Activated CD4-positive, alpha-beta memory T cell treated with anti-CD3 and anti-CD28 coated beads, Interleukin-2, amount 10 ng/mL, durations not matched to agents 7 days and 5 days (primary cell): ENCODE measurements at regions of chr5 and their contacts with region 1.

Region 1: GRCh38 chr5:43120720-43121564 is at the start of gene ZNF131:
- DNase-seq: peak; percentile 97
- H3K4me3 Mint-ChIP-seq: peak within 1 kb of the TSS; percentile 94
- H3K27ac Mint-ChIP-seq: peak within 1 kb of the TSS; percentile 93
- H3K4me1 Mint-ChIP-seq: peaks cover 39% of the 10 kb centered on the region
- H3K27me3 Mint-ChIP-seq: peaks cover 3% of the 10 kb centered on the region
- total RNA-seq, gene ZNF131: 42.5 to 44.7 TPM

Region 2: DNA sequence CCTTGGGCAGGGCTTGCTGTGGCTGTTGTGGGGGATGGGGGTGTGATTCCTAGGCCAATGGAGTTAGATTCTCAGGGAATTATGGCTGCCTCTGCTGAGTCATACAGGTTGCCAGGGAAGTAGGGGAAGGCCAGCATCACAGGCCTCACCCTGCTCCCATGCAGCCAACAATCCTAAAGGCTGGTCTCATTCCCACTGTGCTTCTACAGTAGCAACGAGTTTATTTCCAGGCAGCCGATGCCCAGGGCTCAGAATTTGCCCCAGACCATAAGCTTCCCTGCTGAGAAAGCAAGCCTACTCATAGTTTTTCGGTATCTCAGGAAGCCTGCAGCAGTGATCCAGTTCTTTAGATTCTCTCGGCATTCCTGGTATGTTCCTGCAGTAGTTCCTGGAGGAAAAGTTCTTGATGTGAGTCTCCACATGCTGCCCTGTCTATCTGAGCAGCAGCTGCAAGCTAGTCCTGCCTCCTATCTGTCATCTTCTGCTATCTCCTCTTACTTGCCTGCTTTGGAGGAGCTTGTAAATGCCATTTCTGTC is 250.0 kb before region 1 on chr5:
- CTCF ChIA-PET with region 1: no interaction called
- POLR2A ChIA-PET with region 1: no interaction called
- DNase-seq: no peak
- H3K4me3 Mint-ChIP-seq: no peak overlapping the region
- H3K27ac Mint-ChIP-seq: no peak overlapping the region
- H3K4me1 Mint-ChIP-seq: peaks cover 5% of the 10 kb centered on the region
- H3K27me3 Mint-ChIP-seq: peaks cover 24% of the 10 kb centered on the region

Region 3: DNA sequence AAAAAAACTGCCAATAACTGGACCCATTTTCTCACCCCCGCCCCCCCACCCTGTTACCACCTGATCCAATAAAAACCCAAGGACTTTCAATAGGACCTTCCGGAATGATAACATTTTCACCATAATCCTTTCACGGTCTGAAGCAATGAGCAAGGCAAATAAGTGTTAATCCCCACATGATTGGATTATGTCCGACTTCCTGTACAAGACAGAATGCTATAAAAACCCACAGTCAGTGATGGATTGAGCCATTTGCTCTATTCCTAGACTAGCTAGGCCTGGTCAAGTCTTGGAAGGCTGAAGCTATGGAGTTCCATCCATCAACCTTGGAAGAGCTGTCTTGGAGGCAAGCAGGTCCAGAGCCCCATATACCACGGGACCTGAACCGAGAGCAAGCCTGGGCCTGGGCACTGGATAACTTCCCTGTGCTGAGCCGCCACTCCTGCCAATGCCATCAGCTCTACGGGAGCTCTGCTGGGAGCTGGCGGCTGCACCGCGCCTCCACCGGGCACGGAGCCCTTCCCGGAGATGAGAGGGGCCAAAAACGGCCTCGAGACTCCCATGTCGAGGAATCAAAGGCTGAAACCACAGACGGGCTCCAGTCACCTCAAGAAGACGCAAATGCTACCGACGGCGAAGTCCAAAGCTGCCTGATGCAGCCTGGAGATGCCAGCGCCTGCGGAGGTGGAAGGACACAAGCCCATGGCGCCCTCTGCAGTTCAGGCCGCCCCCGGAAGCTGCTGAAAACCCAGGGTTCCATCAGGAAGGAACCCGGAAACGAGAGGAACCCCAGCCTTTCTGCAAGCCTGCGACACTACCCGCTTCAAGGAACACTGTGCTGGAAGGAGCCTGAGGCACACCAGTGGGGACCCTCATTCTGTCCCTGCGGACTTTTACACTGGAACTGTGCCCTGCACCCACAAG is 150.0 kb before region 1 on chr5:
- CTCF ChIA-PET with region 1: no interaction called
- POLR2A ChIA-PET with region 1: no interaction called
- DNase-seq: no peak
- H3K4me3 Mint-ChIP-seq: no peak overlapping the region
- H3K27ac Mint-ChIP-seq: no peak overlapping the region
- H3K4me1 Mint-ChIP-seq: peaks cover 6% of the 10 kb centered on the region
- H3K27me3 Mint-ChIP-seq: no peaks in the 10 kb centered on the region

Region 4: GRCh38 chr5:42994246-42995151 is 126.4 kb before region 1 on chr5:
- CTCF ChIA-PET with region 1: interaction called, 27 read pairs
- POLR2A ChIA-PET with region 1: interaction called, 63 read pairs
- DNase-seq: peak; percentile 91
- H3K4me3 Mint-ChIP-seq: peak overlapping the region; percentile 99
- H3K27ac Mint-ChIP-seq: peak overlapping the region; percentile 100
- H3K4me1 Mint-ChIP-seq: peaks cover 25% of the 10 kb centered on the region
- H3K27me3 Mint-ChIP-seq: no peaks in the 10 kb centered on the region

Region 5: GRCh38 chr5:43040287-43041098 is 80.4 kb before region 1 on chr5 and contains the start of gene ANXA2R:
- CTCF ChIA-PET with region 1: interaction called, 24 read pairs
- POLR2A ChIA-PET with region 1: interaction called, 130 read pairs
- DNase-seq: peak; percentile 96
- H3K4me3 Mint-ChIP-seq: peak within 1 kb of the TSS; percentile 97
- H3K27ac Mint-ChIP-seq: peak within 1 kb of the TSS; percentile 99
- H3K4me1 Mint-ChIP-seq: peaks cover 42% of the 10 kb centered on the region
- H3K27me3 Mint-ChIP-seq: no peaks in the 10 kb centered on the region
- total RNA-seq, gene ANXA2R: 25.1 to 28.3 TPM

Region 6: GRCh38 chr5:43051668-43052067 is 69.3 kb before region 1 on chr5:
- CTCF ChIA-PET with region 1: no interaction called
- POLR2A ChIA-PET with region 1: no interaction called
- DNase-seq: no peak
- H3K4me3 Mint-ChIP-seq: no peak overlapping the region
- H3K27ac Mint-ChIP-seq: no peak overlapping the region
- H3K4me1 Mint-ChIP-seq: peaks cover 4% of the 10 kb centered on the region
- H3K27me3 Mint-ChIP-seq: peaks cover 2% of the 10 kb centered on the region

Region 7: GRCh38 chr5:43140286-43140685 is 19.3 kb after region 1 on chr5:
- CTCF ChIA-PET with region 1: interaction called, 9 read pairs
- POLR2A ChIA-PET with region 1: interaction called, 15 read pairs
- DNase-seq: no peak
- H3K4me3 Mint-ChIP-seq: no peak overlapping the region
- H3K27ac Mint-ChIP-seq: no peak overlapping the region
- H3K4me1 Mint-ChIP-seq: peaks cover 41% of the 10 kb centered on the region
- H3K27me3 Mint-ChIP-seq: no peaks in the 10 kb centered on the region

Region 8: DNA sequence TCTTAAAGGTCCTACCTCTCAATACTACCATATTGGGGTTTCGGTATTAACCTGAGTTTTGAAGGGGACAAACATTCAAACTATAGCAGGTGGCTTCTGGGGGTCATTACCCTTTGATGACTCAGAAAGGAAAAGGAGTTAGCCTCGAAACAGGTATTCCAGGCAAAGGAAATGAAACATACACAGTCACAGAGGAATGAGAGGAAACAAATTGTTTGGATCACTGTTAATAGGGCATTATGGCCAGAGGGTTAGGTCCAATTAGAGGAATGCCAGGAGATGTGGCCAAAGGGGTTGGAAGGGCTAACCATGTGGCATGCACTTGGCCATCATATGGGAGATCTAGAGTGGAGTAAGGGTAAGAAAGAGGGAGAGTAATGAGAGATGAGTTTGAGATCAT is 47.2 kb after region 1 on chr5:
- CTCF ChIA-PET with region 1: no interaction called
- POLR2A ChIA-PET with region 1: no interaction called
- DNase-seq: no peak
- H3K4me3 Mint-ChIP-seq: no peak overlapping the region
- H3K27ac Mint-ChIP-seq: no peak overlapping the region
- H3K4me1 Mint-ChIP-seq: peaks cover 2% of the 10 kb centered on the region
- H3K27me3 Mint-ChIP-seq: no peaks in the 10 kb centered on the region

Region 9: DNA sequence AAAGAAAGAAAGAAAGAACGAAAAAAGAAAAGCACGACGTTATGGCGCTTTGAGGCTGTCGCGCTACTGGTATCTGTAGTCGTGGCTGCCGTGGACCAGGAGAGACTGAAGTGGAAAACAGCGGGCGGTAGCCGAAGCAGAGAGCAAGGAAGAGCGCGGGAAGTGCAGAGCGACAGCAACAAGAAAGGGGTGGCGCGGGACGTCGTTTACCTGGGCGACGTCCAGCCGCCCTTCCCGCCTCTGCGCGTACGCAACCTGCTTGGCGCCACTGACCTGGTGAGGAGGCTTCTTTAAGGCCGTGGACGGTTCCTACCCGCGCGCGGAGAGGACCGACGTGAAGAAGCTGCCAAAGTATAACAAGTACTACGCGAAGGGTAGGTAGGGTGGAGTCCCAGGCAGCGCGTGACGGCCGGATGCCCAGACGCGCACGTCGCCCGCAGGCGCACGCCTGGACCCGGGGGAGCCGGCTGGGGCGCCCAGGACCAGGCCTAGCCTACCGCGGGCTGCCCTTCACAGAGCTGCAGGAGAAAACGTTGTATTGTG is 275.9 kb after region 1 on chr5:
- CTCF ChIA-PET with region 1: no interaction called
- POLR2A ChIA-PET with region 1: interaction called, 19 read pairs
- DNase-seq: peak; percentile 74
- H3K4me3 Mint-ChIP-seq: peak overlapping the region; percentile 99
- H3K27ac Mint-ChIP-seq: peak overlapping the region; percentile 94
- H3K4me1 Mint-ChIP-seq: peaks cover 33% of the 10 kb centered on the region
- H3K27me3 Mint-ChIP-seq: no peaks in the 10 kb centered on the region